ENCODE measurements at regions of chr14 and their contacts with region 1.

Region 1: DNA sequence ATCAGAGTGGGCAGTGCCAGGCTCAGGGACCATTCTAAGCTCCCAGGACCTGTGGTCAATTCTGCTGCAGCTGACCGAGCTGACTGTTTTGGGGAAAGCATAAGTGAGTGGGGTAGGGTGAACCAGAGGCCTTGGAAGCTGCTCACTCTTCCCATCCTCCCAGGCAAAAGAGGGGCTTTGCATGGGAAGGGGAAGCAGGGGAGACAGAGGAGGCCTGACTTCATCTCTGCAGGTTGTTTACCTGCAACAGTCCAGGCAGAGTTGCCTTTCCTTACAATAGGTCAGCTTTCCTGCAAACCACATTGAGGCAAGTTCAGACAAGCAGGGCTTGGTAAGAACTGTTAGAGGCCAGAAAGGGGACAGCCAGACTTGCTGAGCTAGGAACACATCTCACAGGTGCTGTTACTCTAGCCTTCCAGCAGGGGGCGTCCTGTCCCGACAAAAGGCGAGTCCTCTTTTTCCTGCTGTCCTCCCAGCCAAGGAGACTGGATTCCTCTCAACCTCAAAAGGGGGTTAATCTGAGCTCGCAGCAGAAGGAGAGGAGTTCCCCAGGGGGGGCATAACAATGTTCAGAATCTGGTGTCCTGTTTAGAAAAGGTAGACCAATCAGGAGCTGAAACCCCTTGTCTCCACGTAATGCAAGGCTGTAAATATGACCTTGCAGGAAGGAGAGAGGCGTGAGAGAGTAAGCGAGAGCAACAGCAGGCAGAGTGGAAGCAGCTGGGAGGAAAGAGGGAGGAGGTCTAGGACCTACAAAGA is 4.3 kb upstream of the DHRS2 start:
- DNase-seq: peak; percentile 79
- H3K4me3 ChIP-seq: no peak overlapping the region; a peak in 1 of 4 replicates
- H3K27ac ChIP-seq: no peak overlapping the region; a peak in 1 of 4 replicates
- H3K4me1 ChIP-seq: peaks cover 0 to 12% of the 10 kb centered on the region in 2 experiments; a peak in 1 of 4 replicates
- H3K27me3 ChIP-seq: no peaks in the 10 kb centered on the region
- CTCF ChIP-seq: peak; percentile 93
- EP300 ChIP-seq: no peak
- RAD21 ChIP-seq: peak; percentile 81

Region 2: GRCh38 chr14:23327947-23328744 is 303.7 kb before region 1 on chr14:
- CTCF ChIA-PET with region 1: no interaction called
- POLR2A ChIA-PET with region 1: no interaction called
- DNase-seq: peak; percentile 86
- H3K4me3 ChIP-seq: no peak overlapping the region
- H3K27ac ChIP-seq: no peak overlapping the region
- H3K4me1 ChIP-seq: peaks cover 3 to 4% of the 10 kb centered on the region in 2 experiments; a peak in 3 of 4 replicates
- H3K27me3 ChIP-seq: no peaks in the 10 kb centered on the region
- CTCF ChIP-seq: peak; percentile 93
- EP300 ChIP-seq: no peak
- RAD21 ChIP-seq: peak; percentile 96

Region 3: DNA sequence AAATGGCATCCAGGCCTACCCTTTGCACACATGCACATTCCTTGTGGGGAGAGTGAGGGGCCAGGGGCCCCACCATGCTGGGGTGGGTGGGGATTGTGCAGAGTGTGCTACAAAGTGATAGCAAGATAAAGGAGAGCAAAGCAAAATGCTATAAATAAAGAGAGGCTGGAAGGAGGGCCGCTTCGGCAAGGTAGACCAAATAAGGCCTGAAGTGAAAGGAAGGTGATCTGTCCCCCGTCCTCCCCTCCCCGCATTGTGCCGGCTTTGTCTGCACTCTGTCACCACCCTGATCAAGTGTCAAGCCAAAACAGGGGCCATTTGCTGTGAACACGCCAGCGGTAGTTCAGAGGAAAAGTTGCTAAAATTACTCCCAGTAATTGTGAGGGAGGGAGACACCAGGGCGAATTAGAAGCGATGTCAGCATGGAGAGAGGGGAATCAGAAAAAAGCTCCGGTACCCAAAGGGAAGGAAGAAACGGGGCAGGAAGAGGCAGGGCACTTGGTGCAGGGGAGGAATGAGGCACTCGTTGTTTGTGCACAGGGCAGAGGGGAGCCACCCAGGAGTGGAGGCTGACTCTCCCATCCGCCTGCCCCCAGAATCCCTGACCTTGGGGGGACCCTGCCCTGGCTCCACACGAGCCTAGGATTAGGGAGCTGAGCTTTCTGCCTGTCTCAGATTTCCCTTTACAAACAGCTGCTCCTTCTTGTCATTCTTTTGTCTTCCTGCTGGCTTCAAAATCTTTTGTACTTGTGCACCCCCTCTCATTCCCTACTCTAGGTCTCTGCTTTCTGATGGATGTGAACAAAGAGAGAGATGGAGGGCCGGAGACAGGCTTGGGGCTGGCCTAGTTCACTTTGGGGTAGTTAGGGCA is 193.5 kb before region 1 on chr14:
- CTCF ChIA-PET with region 1: no interaction called
- POLR2A ChIA-PET with region 1: no interaction called
- DNase-seq: no peak
- H3K4me3 ChIP-seq: no peak overlapping the region
- H3K27ac ChIP-seq: no peak overlapping the region
- H3K4me1 ChIP-seq: no peaks in the 10 kb centered on the region
- H3K27me3 ChIP-seq: peaks cover 19% of the 10 kb centered on the region
- CTCF ChIP-seq: no peak
- EP300 ChIP-seq: no peak
- RAD21 ChIP-seq: no peak

Region 4: GRCh38 chr14:23588884-23589598 is 42.8 kb before region 1 on chr14:
- CTCF ChIA-PET with region 1: interaction called, 39 read pairs
- POLR2A ChIA-PET with region 1: interaction called, 4 read pairs
- DNase-seq: peak; percentile 94
- H3K4me3 ChIP-seq: no peak overlapping the region; a peak in 1 of 4 replicates
- H3K27ac ChIP-seq: peak overlapping the region in 1 of 2 experiments; percentile 90; a peak in 2 of 4 replicates
- H3K4me1 ChIP-seq: peaks cover 6 to 7% of the 10 kb centered on the region in 2 experiments; a peak in 3 of 4 replicates
- H3K27me3 ChIP-seq: no peaks in the 10 kb centered on the region
- CTCF ChIP-seq: peak; percentile 84
- EP300 ChIP-seq: peak in 1 of 2 experiments; percentile 83; a peak in 2 of 4 replicates
- RAD21 ChIP-seq: peak; percentile 98

Region 5: DNA sequence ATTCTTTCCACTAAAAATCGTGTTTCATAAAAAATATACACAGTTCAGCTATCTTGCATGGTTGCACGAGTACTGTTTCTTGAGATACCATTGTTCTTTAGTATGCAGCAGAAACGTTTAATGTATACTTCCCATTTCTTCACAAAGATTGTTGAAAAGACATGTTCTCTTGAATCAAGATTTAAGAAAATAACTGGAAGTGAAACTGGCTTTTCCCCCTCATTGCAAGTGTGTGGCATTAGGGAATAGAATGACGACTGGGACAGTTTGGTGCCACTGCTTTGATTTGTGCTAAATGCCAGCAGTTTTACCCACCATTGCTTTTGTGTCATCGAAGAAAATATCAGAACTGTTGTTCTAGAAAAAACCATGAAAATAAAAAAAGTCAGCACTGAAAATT is 16.0 kb before region 1 on chr14:
- CTCF ChIA-PET with region 1: interaction called, 38 read pairs
- POLR2A ChIA-PET with region 1: no interaction called
- DNase-seq: no peak
- H3K4me3 ChIP-seq: no peak overlapping the region
- H3K27ac ChIP-seq: no peak overlapping the region
- H3K4me1 ChIP-seq: no peaks in the 10 kb centered on the region
- H3K27me3 ChIP-seq: no peaks in the 10 kb centered on the region; the same call in 1 of the 2 replicates
- CTCF ChIP-seq: no peak
- EP300 ChIP-seq: no peak
- RAD21 ChIP-seq: no peak

Region 6: GRCh38 chr14:23646648-23647549 is 15.0 kb after region 1 on chr14:
- CTCF ChIA-PET with region 1: interaction called, 35 read pairs
- POLR2A ChIA-PET with region 1: no interaction called
- DNase-seq: no peak
- H3K4me3 ChIP-seq: no peak overlapping the region
- H3K27ac ChIP-seq: no peak overlapping the region
- H3K4me1 ChIP-seq: peaks cover 0 to under 1% of the 10 kb centered on the region in 2 experiments; a peak in 1 of 4 replicates
- H3K27me3 ChIP-seq: no peaks in the 10 kb centered on the region; the same call in 1 of the 2 replicates
- CTCF ChIP-seq: no peak
- EP300 ChIP-seq: no peak
- RAD21 ChIP-seq: no peak

Region 7: DNA sequence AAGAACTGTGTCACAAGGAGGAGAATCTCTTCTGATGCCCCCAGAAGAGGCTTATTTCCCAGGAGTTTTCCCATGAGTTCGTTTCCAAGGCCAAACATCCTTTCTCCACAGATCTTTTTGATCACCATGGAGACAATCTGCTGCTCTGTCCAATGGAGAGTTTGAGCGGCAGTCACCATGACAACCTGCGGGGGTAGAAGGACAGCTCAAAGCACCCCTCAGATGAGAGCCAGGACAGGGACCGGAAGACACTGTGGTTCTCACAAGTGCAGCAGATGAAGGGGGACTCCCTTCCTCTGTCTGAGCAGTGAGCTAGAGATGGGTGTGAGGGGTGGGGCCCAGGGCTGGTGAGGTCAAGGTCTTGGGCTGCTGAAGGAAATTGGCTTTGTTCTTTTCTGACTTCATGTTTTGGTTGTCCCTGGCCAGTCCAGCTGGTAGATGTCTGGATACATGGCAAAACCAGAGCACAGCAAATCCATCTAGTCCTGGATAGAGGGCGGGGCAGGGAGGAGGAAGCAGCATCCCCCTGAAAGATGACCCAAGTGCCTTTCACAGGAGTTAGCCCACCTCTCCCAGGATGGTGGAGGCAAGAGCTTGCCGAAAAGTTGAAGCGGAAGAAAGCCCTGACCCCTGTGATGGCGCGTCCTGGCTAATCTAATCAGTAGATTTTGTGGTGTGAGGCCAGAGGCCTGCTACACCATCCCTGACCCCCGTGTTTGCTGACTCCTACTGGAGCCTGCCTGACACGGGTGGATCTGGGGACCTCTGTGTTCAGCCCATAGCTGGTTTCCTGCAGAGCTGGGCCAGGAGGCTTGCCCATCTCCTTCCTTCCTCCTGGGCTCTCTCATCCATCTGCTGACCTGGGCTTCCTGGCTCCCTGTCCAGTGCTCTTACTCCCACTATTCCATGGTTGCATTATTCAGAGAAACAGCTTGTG is 28.7 kb after region 1 on chr14:
- CTCF ChIA-PET with region 1: interaction called, 21 read pairs
- POLR2A ChIA-PET with region 1: no interaction called
- DNase-seq: no peak
- H3K4me3 ChIP-seq: no peak overlapping the region
- H3K27ac ChIP-seq: no peak overlapping the region
- H3K4me1 ChIP-seq: no peaks in the 10 kb centered on the region; a peak in 1 of 4 replicates
- H3K27me3 ChIP-seq: no peaks in the 10 kb centered on the region; the same call in 1 of the 2 replicates
- CTCF ChIP-seq: no peak
- EP300 ChIP-seq: no peak
- RAD21 ChIP-seq: no peak

Region 8: DNA sequence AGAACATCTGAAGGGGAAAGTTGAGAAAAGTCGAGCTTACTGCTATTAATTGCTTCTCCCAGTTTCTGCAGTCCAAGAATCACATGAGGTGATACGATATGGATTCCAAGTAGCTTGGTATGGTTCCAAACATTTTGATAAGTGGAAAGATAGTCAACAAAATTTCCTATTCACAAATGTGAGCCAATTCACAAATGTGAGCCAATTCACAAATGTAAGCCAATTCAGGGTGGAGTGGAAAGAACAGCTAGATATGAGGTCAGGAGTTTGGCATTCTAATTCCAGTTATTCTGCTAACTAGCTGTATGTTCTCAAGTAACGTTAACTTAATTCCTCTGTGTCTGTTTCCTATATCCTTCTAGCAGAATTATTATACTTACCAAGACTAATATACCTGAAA is 284.1 kb after region 1 on chr14:
- CTCF ChIA-PET with region 1: interaction called, 65 read pairs
- POLR2A ChIA-PET with region 1: no interaction called
- DNase-seq: no peak
- H3K4me3 ChIP-seq: no peak overlapping the region
- H3K27ac ChIP-seq: no peak overlapping the region
- H3K4me1 ChIP-seq: no peaks in the 10 kb centered on the region
- H3K27me3 ChIP-seq: no peaks in the 10 kb centered on the region
- CTCF ChIP-seq: no peak
- EP300 ChIP-seq: no peak
- RAD21 ChIP-seq: no peak

Measured in SK-N-SH (cell line).